OCI-LY7 (cell line): ENCODE measurements at regions of chr1 and their contacts with region 1.

Region 1: GRCh38 chr1:91282695-91283420 is 121.8 kb downstream of the HFM1 start:
- DNase-seq: peak; percentile 64
- H3K4me3 ChIP-seq: no peak overlapping the region
- H3K27ac ChIP-seq: no peak overlapping the region
- H3K4me1 ChIP-seq: no peaks in the 10 kb centered on the region
- CTCF ChIP-seq: peak; percentile 93

Region 2: DNA sequence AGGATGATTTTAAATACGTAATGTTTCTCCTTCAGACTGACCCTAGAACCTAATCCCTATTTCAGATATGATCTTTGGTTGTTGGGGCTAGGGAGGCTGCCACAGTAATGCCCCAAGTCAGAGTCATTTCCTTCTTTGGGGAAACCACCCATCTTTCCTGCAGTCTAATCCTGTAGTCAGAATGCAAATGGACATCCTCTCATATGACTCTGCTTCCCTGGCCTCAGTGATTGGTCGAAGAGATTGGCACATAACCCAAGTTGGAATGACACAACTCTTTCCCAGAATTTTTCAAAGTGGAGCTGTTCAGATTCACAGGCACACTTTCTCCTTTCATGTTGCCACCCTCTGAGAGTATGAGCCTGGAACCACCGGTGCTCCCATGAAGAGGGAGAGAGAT is 202.2 kb before region 1 on chr1:
- CTCF ChIA-PET with region 1: no interaction called
- POLR2A ChIA-PET with region 1: no interaction called
- intact Hi-C with region 1: no loop called
- DNase-seq: no peak
- H3K4me3 ChIP-seq: no peak overlapping the region
- H3K27ac ChIP-seq: no peak overlapping the region
- H3K4me1 ChIP-seq: no peaks in the 10 kb centered on the region
- CTCF ChIP-seq: no peak

Region 3: DNA sequence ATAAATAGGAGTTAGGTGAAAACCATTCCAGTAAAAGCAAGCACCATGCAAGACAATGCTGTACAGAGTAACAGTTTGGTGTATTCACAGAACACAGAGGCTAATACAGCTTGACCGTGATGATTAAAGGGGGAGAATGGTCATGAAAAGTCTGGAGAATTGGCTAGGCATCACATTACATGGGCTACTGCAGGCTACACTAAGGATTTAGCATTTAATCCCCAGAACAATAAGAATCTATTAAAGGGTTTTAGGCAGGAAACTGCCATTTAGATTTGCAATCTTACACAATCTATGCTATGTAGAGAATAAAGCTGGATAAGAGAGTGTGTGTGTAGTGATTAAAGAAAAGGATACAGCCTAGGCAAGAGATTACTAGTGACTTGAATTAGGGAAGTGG is 91.2 kb after region 1 on chr1:
- CTCF ChIA-PET with region 1: no interaction called
- POLR2A ChIA-PET with region 1: no interaction called
- intact Hi-C with region 1: no loop called
- DNase-seq: no peak
- H3K4me3 ChIP-seq: no peak overlapping the region
- H3K27ac ChIP-seq: no peak overlapping the region
- H3K4me1 ChIP-seq: no peaks in the 10 kb centered on the region
- CTCF ChIP-seq: no peak

Region 4: GRCh38 chr1:91924146-91924545 is 641.3 kb after region 1 on chr1:
- CTCF ChIA-PET with region 1: no interaction called
- POLR2A ChIA-PET with region 1: no interaction called
- intact Hi-C with region 1: loop called (anchors 1 kb)
- DNase-seq: no peak
- H3K4me3 ChIP-seq: no peak overlapping the region
- H3K27ac ChIP-seq: no peak overlapping the region
- H3K4me1 ChIP-seq: no peaks in the 10 kb centered on the region
- CTCF ChIP-seq: no peak